Ovary (tissue), 10 donors: ENCODE measurements at regions of chr6 and their contacts with region 1.

Region 1: DNA sequence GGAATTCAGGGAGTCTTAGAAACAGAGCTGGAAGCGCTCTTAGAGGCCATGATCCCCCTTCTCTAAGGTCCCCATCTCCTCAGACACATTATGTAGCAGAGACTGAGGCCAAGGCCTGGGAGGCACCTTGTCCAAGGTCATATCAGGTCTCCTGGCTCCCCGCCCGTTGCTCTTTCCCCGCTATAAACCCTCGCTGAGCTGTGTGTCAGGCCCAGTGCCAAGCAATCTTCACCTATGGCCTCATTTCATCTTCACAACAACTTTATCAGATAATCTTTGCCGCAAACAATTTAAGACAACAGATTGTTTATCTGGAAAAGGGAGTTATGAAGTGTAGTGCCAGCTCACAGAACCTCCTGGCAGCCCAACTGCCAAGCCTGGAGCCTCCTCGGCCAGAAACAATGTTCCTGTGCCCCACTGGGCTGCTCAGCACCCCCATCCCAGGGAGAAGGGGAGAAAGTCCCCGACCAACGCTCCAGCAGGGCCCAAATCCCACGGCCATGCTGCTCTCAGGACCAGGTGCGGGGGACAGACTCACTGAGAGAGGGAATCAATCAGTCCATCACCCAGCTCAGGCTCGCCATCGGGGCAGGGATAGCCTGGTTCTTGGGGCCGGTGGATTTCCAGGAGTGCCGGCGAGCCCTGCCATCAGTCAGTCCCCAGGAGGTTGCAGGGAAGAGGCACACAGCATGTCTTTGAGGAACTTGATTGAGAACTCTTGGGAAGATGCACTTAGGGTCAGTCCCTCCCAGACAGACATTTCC is 16.9 kb upstream of the FANCE start:
- DNase-seq: no peak
- H3K4me3 ChIP-seq: no peak overlapping the region
- H3K27ac ChIP-seq: no peak overlapping the region
- H3K4me1 ChIP-seq: no peaks in the 10 kb centered on the region
- H3K27me3 ChIP-seq: no peaks in the 10 kb centered on the region
- CTCF ChIP-seq: no peak
- EP300 ChIP-seq: no peak
- POLR2A ChIP-seq: no peak

Region 2: DNA sequence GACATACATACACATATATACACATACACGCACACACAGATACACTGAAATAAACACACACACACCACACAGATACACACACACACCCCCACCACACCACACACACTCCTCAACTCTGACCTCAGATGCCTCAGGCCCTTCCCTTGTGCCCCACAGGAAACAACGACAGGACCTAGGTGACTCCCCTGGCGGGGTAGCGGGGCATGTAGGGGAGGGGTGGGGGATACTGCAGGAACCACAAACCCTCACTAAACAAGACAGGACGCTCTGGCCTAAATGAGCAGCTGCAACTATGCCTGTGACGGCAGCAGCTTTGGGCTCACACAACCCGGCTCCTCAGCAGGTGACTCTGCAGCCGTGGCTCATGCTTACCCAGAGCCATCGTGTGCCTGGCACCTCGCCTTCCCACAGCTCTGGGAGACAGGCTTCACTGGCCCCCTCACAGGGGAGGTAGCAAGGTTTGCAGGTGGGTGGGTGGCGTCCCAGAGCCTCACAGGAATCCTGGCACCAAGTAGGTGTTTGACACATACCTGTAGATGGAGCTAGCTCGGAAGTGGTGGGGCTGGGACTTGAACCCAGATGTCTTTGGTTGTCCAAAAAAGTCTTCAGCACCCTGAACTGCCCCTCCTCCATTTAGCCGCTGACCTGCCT is 1390.2 kb before region 1 on chr6:
- intact Hi-C with region 1: loop called in 1 of 4 experiments (anchors 5 kb)
- DNase-seq: no peak
- H3K4me3 ChIP-seq: no peak overlapping the region
- H3K27ac ChIP-seq: no peak overlapping the region
- H3K4me1 ChIP-seq: no peaks in the 10 kb centered on the region
- H3K27me3 ChIP-seq: no peaks in the 10 kb centered on the region
- CTCF ChIP-seq: no peak
- EP300 ChIP-seq: no peak
- POLR2A ChIP-seq: no peak